Left ventricle myocardium inferior (tissue), 1 donor: ENCODE measurements at regions of chr10 and their contacts with region 1.

Region 1: DNA sequence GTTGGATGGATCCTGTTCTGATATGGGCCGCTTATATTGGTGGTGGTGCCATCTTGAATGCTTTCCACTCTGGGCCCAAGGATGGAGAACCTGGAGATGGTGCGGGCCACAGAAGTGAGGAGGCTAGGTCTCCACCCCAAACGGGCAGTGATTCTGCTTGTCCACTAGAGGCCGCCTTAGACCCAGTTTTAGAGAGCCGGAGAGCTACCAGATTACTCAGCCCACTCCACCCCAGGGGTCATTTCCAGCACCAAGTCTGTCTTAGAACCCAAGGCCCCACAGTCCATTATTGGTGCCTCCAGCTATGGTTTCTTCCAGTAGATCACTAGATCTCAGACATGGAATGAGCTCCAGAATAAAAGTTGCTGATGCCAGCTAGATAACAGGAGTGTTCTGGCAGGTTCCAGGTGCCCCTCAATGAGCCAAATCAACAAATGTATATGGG is 11.8 kb upstream of the CAMK2G start:
- DNase-seq: peak; percentile 58
- H3K4me3 ChIP-seq: no peak overlapping the region
- H3K27ac ChIP-seq: peak overlapping the region; percentile 87
- H3K4me1 ChIP-seq: peaks cover 32% of the 10 kb centered on the region
- H3K27me3 ChIP-seq: peaks cover 5% of the 10 kb centered on the region
- CTCF ChIP-seq: peak; percentile 89

Region 2: GRCh38 chr10:73358331-73359279 is 527.5 kb before region 1 on chr10 and contains the start of gene CFAP70:
- intact Hi-C with region 1: no loop called
- DNase-seq: peak; percentile 90
- H3K4me3 ChIP-seq: peak within 1 kb of the TSS; percentile 88
- H3K27ac ChIP-seq: peak within 1 kb of the TSS; percentile 76
- H3K4me1 ChIP-seq: peaks cover 18% of the 10 kb centered on the region
- H3K27me3 ChIP-seq: no peaks in the 10 kb centered on the region
- CTCF ChIP-seq: no peak
- total RNA-seq, gene CFAP70: 2.0 TPM

Region 3: GRCh38 chr10:73926152-73926764 is 40.2 kb after region 1 on chr10:
- intact Hi-C with region 1: no loop called
- DNase-seq: no peak
- H3K4me3 ChIP-seq: no peak overlapping the region
- H3K27ac ChIP-seq: no peak overlapping the region
- H3K4me1 ChIP-seq: no peaks in the 10 kb centered on the region
- H3K27me3 ChIP-seq: no peaks in the 10 kb centered on the region
- CTCF ChIP-seq: no peak

Region 4: DNA sequence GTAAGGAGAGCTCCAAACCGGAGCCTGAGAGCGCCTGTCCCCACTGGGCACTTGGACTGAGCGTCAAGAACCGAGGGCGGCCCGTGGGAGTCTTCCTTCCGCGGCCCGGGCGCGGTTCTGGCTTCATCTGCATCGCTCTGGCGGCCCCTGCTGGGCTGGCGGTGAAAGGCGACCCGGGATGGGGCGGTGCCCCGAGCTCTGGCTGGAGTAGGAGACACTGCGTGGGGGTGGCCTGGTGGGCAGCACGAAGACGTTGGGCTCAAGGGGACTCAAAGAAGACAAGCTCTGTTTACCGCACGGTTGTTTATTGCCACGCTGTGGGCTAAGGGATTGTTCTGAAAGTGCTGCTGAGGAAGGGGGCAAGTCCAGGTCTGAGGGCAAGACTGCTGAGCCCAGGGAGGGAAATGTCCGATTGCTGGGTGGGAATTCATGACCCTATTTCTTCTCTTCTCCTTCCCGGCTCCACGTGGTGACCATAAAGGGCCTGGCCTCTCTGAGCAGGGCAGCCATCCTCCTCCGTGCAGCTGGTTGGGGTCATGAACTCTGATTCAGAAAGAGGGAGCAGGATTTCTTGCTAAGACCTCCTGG is 54.6 kb after region 1 on chr10:
- intact Hi-C with region 1: loop called (anchors 2 kb)
- DNase-seq: peak; percentile 91
- H3K4me3 ChIP-seq: peak overlapping the region; percentile 43
- H3K27ac ChIP-seq: peak overlapping the region; percentile 84
- H3K4me1 ChIP-seq: peaks cover 52% of the 10 kb centered on the region
- H3K27me3 ChIP-seq: no peaks in the 10 kb centered on the region
- CTCF ChIP-seq: peak; percentile 96